IMR-90 (cell line): ENCODE measurements at regions of chr7 and their contacts with region 1.

Region 1: GRCh38 chr7:41051535-41051934 is 651.4 kb downstream of the INHBA start:
- DNase-seq: no peak
- ATAC-seq: no peak
- H3K4me3 ChIP-seq: no peak overlapping the region
- H3K27ac ChIP-seq: no peak overlapping the region
- H3K4me1 ChIP-seq: peaks cover 18% of the 10 kb centered on the region
- H3K27me3 ChIP-seq: no peaks in the 10 kb centered on the region
- CTCF ChIP-seq: no peak
- POLR2A ChIP-seq: no peak
- RAD21 ChIP-seq: no peak

Region 2: DNA sequence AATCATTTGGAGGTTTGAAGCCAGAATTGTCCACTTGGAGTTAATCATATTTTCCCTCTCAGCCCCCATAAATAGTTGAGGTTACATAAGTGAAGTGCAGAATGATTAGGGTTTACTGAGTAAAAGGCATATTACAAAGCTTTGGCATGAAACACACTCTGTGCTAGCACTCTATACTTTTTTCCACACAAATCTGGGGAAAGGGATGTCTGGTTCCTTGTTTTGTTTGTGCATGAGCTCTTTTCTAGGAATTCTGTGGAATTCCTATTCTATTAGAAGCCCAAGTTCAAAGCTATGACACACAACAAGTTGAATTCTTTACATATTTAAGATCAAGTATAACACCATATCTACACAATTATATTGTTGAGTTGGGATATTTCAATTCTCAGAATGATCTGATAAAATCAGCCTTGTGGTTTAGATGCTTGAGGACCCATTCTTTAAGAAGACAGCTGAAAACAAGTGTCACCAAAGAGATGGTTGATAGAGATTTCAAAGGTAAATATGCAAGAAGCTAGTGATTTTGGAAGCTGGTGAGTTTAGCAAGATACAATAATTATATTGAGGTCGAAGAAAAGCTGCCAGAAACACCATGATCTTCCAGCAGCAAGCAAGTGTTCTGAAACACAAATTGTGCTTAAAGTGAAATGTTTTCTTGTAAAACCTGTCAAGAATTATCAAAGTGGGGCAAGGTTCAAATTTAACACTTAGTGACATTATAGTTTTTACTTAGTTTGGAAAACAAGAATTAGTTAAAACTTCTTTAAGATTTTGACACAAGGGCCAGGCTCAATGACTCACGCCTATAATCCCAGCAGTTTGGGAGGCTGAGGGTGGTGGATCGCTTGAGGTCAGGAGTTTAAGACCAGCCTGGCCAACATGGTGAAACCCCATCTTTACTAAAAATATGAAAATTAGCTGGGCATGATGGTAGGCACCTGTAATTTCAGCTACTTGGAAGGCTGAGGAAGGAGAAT is 528.7 kb after region 1 on chr7:
- CTCF ChIA-PET with region 1: no interaction called
- POLR2A ChIA-PET with region 1: interaction called, 20 read pairs
- dilution Hi-C with region 1: no loop called
- in situ Hi-C with region 1: no loop called
- intact Hi-C with region 1: no loop called
- DNase-seq: peak; percentile 96
- ATAC-seq: peak; percentile 82
- H3K4me3 ChIP-seq: no peak overlapping the region
- H3K27ac ChIP-seq: no peak overlapping the region; the same call in 1 of the 2 replicates
- H3K4me1 ChIP-seq: peaks cover 12% of the 10 kb centered on the region; the same call in 1 of the 2 replicates
- H3K27me3 ChIP-seq: no peaks in the 10 kb centered on the region
- CTCF ChIP-seq: no peak
- POLR2A ChIP-seq: no peak
- RAD21 ChIP-seq: no peak; the same call in 1 of the 2 replicates

Region 3: DNA sequence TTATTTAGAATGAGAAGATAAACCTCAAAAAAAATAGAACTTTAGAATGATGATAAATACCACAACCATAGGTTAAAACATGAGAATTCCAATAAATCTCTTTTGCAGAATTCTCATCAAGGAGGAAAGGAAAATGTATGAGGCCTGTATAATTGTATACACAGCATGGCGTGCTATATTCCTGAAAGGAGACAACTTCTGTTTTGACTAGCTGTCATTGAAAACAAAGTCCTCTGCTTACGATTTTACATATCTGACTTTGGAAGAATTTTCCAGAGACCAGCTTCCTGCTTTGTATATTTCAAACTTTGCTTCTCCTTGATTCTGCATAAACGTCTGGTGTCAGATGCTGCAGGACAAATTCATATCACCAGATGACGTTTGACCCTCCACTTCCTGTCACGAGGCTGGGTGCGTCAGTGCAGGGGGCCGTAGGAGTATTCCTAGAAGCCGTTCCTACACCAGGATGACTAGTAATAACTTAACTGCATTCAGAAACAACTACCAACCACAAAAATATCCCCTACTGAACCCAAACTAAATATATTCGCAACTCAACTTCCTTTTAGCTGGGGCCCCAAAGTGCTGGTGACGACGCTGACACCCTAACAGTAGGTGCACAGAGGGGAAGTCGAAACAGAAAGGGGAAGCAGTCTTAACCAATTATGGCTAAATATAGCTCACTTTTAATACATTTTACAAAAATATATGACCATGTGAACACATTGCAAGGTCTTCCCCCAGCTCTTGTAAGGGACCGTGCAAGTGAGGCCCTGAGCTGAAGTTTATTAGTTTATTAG is 830.0 kb after region 1 on chr7:
- CTCF ChIA-PET with region 1: no interaction called
- POLR2A ChIA-PET with region 1: no interaction called
- dilution Hi-C with region 1: no loop called
- in situ Hi-C with region 1: no loop called
- intact Hi-C with region 1: loop called (anchors 5 kb)
- DNase-seq: peak; percentile 89
- ATAC-seq: no peak
- H3K4me3 ChIP-seq: no peak overlapping the region
- H3K27ac ChIP-seq: peak overlapping the region; percentile 59
- H3K4me1 ChIP-seq: peaks cover 38% of the 10 kb centered on the region
- H3K27me3 ChIP-seq: no peaks in the 10 kb centered on the region
- CTCF ChIP-seq: no peak
- POLR2A ChIP-seq: no peak
- RAD21 ChIP-seq: no peak